Sciatic nerve (tissue), 2 donors: ENCODE measurements at regions of chr11 and their contacts with region 1.

Region 1: GRCh38 chr11:43145653-43146052 is 166.1 kb upstream of the API5 start:
- DNase-seq: no peak
- ATAC-seq: no peak

Region 2: GRCh38 chr11:43172477-43172876 is 26.8 kb after region 1 on chr11:
- intact Hi-C with region 1: loop called (anchors 1 kb)
- DNase-seq: no peak
- ATAC-seq: no peak

Region 3: GRCh38 chr11:44326615-44327475 is 1181.2 kb after region 1 on chr11:
- intact Hi-C with region 1: no loop called
- DNase-seq: no peak
- ATAC-seq: peak; percentile 10

Region 4: DNA sequence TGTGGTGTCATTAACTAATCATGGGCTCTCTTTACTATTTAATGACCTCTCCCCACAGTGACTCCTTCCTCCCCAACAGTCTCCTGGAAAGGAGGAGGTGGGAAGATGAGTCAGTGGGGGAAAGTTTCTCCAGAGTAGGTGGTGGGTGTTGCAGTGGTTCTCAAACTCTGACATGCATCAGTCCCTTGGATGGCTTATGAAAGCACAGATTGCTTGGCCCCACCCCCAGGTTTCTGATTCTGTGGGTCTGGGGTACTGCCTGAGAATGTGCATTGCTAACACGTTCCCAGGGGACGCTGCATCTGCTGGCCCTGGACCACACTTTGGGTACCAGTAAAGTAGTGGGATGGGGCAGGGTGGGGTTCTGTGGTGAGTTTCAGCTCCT is 1429.6 kb after region 1 on chr11:
- intact Hi-C with region 1: no loop called
- DNase-seq: no peak
- ATAC-seq: no peak